Breast epithelium (tissue), 4 donors: ENCODE measurements at regions of chr9 and their contacts with region 1.

Region 1: DNA sequence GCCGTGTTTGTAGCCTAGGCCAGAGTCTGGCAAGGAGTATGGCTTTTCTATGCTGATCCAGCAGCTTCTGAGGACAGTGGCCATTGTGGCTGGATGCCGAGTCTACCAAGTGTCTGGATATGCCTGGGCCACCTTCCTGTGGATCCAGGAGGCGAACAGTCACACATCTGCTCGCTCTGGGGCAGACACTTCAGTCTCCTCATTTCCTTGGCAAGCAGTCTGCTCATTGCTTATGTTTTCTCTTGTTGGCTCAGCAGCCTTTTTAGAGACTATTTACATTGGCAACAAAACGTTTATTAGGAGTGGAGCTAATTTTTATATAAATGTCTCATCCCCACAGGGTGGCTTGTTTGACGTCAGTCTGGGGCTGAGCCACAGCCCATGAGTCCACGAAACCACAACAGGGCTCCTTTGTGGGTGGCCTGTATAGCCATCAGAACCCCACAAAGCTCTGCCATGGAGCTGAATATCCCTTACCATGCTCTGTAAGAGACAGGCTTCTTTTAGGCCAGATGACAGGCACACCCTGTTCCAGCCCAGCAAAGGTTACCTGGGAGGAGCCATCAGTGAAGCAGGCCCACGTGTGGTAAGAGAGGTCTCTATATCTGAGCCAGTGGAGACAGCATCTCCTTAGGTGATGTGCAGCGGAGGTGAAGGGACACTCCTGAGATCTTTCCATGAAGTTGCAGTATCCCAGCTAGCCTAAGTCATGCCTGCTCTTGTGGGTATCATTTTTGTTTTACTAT is 221.7 kb downstream of the DIRAS2 start:
- DNase-seq: peak in 1 of 2 donors; percentile 58
- H3K4me3 ChIP-seq: no peak overlapping the region
- H3K27ac ChIP-seq: peak overlapping the region; percentile 8 to 48
- H3K4me1 ChIP-seq: no peaks in the 10 kb centered on the region
- H3K27me3 ChIP-seq: no peaks in the 10 kb centered on the region
- CTCF ChIP-seq: no peak
- POLR2A ChIP-seq: no peak

Region 2: GRCh38 chr9:89929673-89930480 is 491.1 kb before region 1 on chr9:
- intact Hi-C with region 1: loop called (anchors 5 kb)
- DNase-seq: no peak
- H3K4me3 ChIP-seq: no peak overlapping the region
- H3K27ac ChIP-seq: no peak overlapping the region
- H3K4me1 ChIP-seq: no peaks in the 10 kb centered on the region
- H3K27me3 ChIP-seq: peaks cover 0 to 5% of the 10 kb centered on the region in 2 donors
- CTCF ChIP-seq: no peak
- POLR2A ChIP-seq: no peak

Region 3: GRCh38 chr9:90433398-90433941 is 12.5 kb after region 1 on chr9:
- intact Hi-C with region 1: no loop called
- DNase-seq: peak; percentile 48 to 62
- H3K4me3 ChIP-seq: peak overlapping the region in 2 of 3 donors; percentile 13 to 15
- H3K27ac ChIP-seq: peak overlapping the region; percentile 2 to 68
- H3K4me1 ChIP-seq: no peaks in the 10 kb centered on the region
- H3K27me3 ChIP-seq: no peaks in the 10 kb centered on the region
- CTCF ChIP-seq: no peak
- POLR2A ChIP-seq: no peak

Region 4: DNA sequence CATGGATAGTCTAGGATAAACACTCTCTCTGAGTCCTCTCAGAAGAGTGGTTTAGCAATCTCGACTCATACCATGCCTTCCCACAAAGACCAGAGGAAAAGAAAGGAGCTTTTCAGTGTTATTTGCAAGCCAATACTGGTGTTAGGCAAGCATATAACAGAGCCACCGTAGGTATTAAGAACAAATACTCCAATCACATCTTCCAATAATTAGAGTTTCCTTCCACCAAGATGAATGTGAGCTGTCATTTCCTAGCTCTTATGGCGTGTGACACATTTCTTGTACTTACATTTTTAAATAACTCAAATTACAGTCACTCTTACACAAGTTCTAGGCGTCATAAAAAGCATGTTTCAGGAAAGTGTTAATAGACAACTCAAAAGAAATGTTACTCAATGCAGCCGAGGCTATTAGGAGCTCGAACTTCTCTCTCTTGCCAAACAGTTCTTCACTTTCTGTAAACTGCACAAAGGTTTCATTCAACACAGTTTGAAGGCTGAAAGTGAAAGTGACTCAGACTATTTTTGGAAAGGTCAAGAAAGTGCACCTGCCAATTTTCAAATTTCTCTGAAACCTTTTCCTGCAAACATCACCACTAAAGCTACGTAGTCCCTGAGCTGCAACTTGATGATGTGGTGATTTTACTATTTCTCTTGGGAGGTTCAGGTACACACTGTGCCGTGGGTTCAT is 786.9 kb after region 1 on chr9:
- intact Hi-C with region 1: no loop called
- DNase-seq: no peak
- H3K4me3 ChIP-seq: peak overlapping the region in 2 of 3 donors; percentile 4 to 30
- H3K27ac ChIP-seq: peak overlapping the region; percentile 88 to 89
- H3K4me1 ChIP-seq: peaks cover 0 to 14% of the 10 kb centered on the region in 2 donors
- H3K27me3 ChIP-seq: no peaks in the 10 kb centered on the region
- CTCF ChIP-seq: no peak
- POLR2A ChIP-seq: no peak